ENCODE measurements at regions of chr15 and their contacts with region 1.

Region 1: GRCh38 chr15:74635228-74635627 is 19.6 kb downstream of the CLK3 start:
- DNase-seq: peak; percentile 65
- H3K4me3 ChIP-seq: no peak overlapping the region
- H3K27ac ChIP-seq: no peak overlapping the region
- H3K4me1 ChIP-seq: no peaks in the 10 kb centered on the region
- H3K27me3 ChIP-seq: no peaks in the 10 kb centered on the region
- CTCF ChIP-seq: peak; percentile 74 to 81 (median 80)
- POLR2A ChIP-seq: no peak

Region 2: GRCh38 chr15:74373731-74374647 is 261.2 kb before region 1 on chr15:
- intact Hi-C with region 1: no loop called
- DNase-seq: peak; percentile 96
- H3K4me3 ChIP-seq: peak overlapping the region; percentile 42 to 63
- H3K27ac ChIP-seq: peak overlapping the region; percentile 58 to 80
- H3K4me1 ChIP-seq: peaks cover 33% of the 10 kb centered on the region
- H3K27me3 ChIP-seq: no peaks in the 10 kb centered on the region
- CTCF ChIP-seq: peak; percentile 71 to 86 (median 79)
- POLR2A ChIP-seq: no peak

Region 3: DNA sequence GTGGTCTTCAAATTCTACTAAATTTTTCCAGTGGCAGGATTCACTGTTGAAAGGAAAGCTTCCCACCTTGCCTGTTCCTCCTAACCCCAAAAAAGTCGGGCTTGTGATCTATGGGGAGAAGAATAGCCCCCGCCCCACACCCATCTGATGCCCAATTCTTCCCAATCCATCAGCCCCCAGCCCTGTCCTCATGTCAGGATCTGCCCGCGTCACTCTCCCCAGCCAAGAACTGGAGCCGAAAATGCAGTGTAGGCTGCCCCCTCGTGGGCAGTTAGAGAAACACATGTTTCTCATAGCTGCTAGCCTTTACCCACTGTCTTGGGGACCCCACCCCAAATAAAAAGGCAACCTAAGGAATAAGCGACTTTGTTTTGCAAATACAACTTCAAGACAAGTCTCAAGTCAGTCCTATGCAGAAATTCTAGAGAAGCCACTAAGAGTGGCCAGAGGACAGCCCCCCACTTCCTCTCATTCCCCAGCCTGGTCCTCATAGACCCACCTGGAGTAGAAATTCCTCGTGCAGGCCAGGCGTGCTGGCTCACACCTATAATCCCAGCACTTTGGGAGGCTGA is 133.6 kb after region 1 on chr15:
- intact Hi-C with region 1: loop called (anchors 5 kb)
- DNase-seq: peak; percentile 86
- H3K4me3 ChIP-seq: no peak overlapping the region
- H3K27ac ChIP-seq: no peak overlapping the region
- H3K4me1 ChIP-seq: peaks cover 10% of the 10 kb centered on the region
- H3K27me3 ChIP-seq: no peaks in the 10 kb centered on the region
- CTCF ChIP-seq: peak; percentile 84 to 92 (median 87)
- POLR2A ChIP-seq: no peak

Region 4: DNA sequence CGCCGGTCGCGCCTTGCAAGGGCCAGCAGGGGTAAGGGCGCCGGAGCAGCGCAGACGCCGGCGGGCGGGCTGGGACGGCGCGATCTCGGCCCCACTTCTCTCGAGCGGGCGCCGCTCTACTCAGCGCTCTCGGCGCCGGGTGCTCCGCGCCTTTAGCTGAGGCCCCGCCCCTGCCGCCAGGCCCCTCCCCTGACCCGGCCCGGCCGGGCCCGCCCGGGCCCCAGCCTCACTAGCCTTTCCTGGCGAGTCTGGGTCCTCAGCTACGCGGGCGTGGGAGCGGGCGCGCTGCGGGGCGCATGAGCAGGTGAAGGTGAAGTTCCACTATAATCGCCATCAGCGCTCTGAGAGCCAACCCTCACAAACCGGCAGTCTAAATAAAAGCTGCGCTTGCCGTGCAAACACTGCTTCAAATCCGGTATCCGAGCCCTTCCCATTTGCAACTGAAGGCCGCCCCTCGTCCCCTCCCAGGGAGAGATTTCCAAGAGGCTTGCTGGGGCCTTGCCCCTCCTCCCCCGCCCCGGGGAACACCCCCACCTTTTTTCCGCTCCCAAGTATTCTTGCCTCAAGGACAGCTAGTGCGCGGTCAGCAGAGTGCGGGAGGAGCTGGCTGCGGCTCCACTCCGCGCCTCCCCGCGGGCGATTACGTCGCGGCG is 321.5 kb after region 1 on chr15 and contains the start of gene RPP25:
- intact Hi-C with region 1: loop called (anchors 10 kb)
- DNase-seq: peak; percentile 85
- H3K4me3 ChIP-seq: peak within 1 kb of the TSS; percentile 62 to 68
- H3K27ac ChIP-seq: peak within 1 kb of the TSS; percentile 72 to 89
- H3K4me1 ChIP-seq: peaks cover 34% of the 10 kb centered on the region
- H3K27me3 ChIP-seq: no peaks in the 10 kb centered on the region
- CTCF ChIP-seq: no peak
- POLR2A ChIP-seq: no peak
- total RNA-seq, gene RPP25: 6.5 to 15.9 TPM